K562 (cell line): ENCODE measurements at regions of chrX and their contacts with region 1.

Region 1: DNA sequence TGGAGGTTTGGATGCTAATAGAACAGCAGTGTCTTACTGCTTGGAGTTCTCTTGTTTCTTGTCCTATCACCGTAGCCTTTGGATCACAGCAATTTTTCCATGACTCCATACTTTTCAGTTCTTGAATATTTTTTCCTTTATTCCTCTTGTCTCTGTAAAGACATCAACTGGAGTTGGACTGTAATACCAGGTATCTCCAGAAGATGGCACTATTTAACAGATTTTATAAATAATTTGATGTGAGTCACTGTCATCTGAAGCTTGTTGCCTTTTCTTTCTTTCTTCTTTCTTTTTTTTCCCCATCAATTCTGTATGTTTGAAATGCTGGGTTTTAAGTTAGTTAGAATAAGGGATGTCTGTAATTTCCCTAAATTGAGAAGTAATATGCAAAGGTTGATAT is 24.1 kb downstream of the HPRT1 start:
- DNase-seq: peak; percentile 10 to 57 (median 17)
- ATAC-seq: peak; percentile 64; the same call in 2 of the 3 replicates
- H3K4me3 ChIP-seq: no peak overlapping the region
- H3K27ac ChIP-seq: no peak overlapping the region
- H3K4me1 ChIP-seq: no peaks in the 10 kb centered on the region
- H3K27me3 ChIP-seq: no peaks in the 10 kb centered on the region
- CTCF ChIP-seq: peak; percentile 33 to 63 (median 48); a peak in 4 of 6 replicates
- EP300 ChIP-seq: no peak
- POLR2A ChIP-seq: no peak
- RAD21 ChIP-seq: peak; percentile 67 to 68

Region 2: DNA sequence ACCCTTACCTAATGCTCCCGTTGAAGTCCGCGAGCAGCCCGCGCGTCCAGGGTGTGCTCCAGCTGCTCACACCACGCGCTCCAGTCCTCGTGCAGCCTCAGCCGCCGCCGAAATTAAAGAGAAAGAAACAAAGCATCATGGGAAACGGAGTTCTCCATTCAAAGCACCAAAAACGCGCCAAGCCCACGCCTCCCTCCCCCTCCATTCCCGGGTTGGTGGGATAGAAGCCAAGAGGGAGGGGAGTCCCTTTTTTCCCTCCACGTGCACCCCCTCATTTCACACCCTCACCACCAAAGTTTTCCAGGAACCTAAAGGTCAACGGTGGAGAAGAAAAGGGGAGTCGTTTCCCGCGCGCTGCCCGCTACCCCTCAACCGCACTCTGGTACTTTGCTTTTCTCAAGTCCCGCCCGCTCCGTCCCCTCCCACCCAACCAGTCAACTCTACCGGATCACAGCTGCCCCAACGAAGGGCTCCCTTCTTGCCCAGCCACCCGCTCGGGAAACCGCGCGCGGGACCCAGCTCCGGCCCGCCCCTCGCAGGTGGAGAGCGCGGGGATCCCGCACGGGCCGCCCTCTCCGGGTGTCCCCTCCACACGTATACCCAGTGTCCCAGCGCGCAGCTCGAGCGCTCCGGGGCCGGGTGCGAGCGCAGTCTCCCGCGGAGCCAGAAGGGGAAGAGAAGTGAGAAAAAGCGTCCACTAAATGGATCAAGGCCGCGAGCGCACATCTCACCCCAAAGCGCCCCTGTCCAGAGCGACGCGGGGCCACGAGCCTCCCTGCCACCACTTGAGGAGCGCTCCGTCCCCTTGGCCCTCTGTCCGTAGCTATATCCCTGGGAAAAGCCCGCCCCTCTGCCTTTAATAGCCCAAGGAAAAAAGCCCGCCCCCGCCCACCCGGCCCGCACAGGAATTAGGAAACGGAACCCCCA is 312.1 kb before region 1 on chrX:
- CTCF ChIA-PET with region 1: no interaction called
- POLR2A ChIA-PET with region 1: no interaction called
- in situ Hi-C with region 1: no loop called
- intact Hi-C with region 1: no loop called
- DNase-seq: no peak
- ATAC-seq: no peak
- H3K4me3 ChIP-seq: no peak overlapping the region
- H3K27ac ChIP-seq: no peak overlapping the region
- H3K4me1 ChIP-seq: peaks cover 0 to 3% of the 10 kb centered on the region in 2 experiments; a peak in 1 of 5 replicates
- H3K27me3 ChIP-seq: peaks cover 3 to 9% of the 10 kb centered on the region in 2 experiments; a peak in 2 of 5 replicates
- CTCF ChIP-seq: no peak
- EP300 ChIP-seq: no peak
- POLR2A ChIP-seq: no peak
- RAD21 ChIP-seq: no peak

Region 3: GRCh38 chrX:134355996-134356395 is 128.0 kb before region 1 on chrX:
- CTCF ChIA-PET with region 1: no interaction called
- POLR2A ChIA-PET with region 1: no interaction called
- in situ Hi-C with region 1: no loop called
- intact Hi-C with region 1: no loop called
- DNase-seq: no peak
- ATAC-seq: no peak
- H3K4me3 ChIP-seq: no peak overlapping the region
- H3K27ac ChIP-seq: no peak overlapping the region
- H3K4me1 ChIP-seq: no peaks in the 10 kb centered on the region
- H3K27me3 ChIP-seq: no peaks in the 10 kb centered on the region
- CTCF ChIP-seq: no peak
- EP300 ChIP-seq: no peak
- POLR2A ChIP-seq: no peak
- RAD21 ChIP-seq: no peak

Region 4: DNA sequence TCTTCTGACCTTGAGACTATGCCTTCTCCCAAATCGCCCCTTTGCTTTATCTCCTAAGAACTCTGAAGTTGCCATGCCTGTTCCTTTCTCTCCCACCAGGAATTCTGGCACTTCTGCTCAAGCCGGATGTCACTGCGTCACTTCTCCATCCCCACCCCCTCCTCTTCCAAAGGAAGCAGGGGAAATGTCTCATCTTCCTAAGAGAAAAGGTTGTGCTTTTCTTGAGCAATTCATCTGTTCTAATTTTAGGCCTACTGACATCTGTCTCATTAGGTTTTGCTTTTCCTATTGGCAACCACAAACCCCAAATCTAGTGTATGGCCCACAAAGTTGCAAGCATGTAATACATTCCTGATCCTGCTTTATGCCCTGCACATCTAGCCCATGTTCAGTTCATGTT is 337.3 kb after region 1 on chrX:
- CTCF ChIA-PET with region 1: no interaction called
- POLR2A ChIA-PET with region 1: no interaction called
- in situ Hi-C with region 1: no loop called
- intact Hi-C with region 1: no loop called
- DNase-seq: no peak
- ATAC-seq: no peak
- H3K4me3 ChIP-seq: no peak overlapping the region
- H3K27ac ChIP-seq: no peak overlapping the region
- H3K4me1 ChIP-seq: no peaks in the 10 kb centered on the region; a peak in 1 of 5 replicates
- H3K27me3 ChIP-seq: no peaks in the 10 kb centered on the region
- CTCF ChIP-seq: no peak
- EP300 ChIP-seq: no peak
- POLR2A ChIP-seq: no peak
- RAD21 ChIP-seq: no peak

Region 5: DNA sequence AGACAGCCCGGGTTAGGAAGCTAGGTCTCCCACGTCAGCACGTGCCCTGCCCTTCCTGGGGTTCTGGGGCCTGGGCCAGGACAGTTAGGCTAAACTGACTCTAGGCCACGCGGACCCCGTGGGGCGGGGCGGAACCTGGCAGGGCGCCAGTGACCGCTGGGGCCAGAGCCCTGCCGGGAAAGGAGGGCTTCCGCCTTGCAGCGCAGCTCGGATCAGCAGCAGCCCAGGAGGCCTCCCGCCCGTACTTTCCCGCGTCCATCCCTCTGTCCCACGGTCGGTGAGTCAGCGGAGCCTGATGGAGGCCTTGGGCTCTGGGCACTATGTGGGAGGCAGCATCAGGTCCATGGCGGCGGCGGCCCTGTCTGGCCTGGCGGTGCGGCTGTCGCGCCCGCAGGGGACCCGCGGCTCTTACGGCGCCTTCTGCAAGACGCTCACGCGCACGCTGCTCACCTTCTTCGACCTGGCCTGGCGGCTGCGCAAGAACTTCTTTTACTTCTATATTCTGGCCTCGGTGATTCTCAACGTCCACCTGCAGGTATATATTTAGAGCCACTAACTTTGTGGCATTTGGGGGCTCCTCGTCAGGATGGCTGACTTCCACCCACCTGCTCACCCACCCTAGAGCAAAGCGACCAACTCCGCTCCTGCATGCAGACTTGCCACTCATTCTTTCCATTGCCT is 506.9 kb after region 1 on chrX and contains the start of gene SMIM10:
- CTCF ChIA-PET with region 1: no interaction called
- POLR2A ChIA-PET with region 1: no interaction called
- in situ Hi-C with region 1: no loop called
- intact Hi-C with region 1: loop called (anchors 10 kb)
- DNase-seq: peak; percentile 83 to 91 (median 85)
- ATAC-seq: peak; percentile 97
- H3K4me3 ChIP-seq: peak within 1 kb of the TSS; percentile 38
- H3K27ac ChIP-seq: peak within 1 kb of the TSS; percentile 77
- H3K4me1 ChIP-seq: peaks cover 7 to 11% of the 10 kb centered on the region in 2 experiments; a peak in 4 of 5 replicates
- H3K27me3 ChIP-seq: no peaks in the 10 kb centered on the region
- CTCF ChIP-seq: no peak
- EP300 ChIP-seq: peak; percentile 42; the same call in 1 of the 2 replicates
- POLR2A ChIP-seq: peak; percentile 77
- RAD21 ChIP-seq: no peak
- polyA plus RNA-seq, gene SMIM10: 2.1 to 4.2 TPM